Activated CD4-positive, alpha-beta memory T cell treated with anti-CD3 and anti-CD28 coated beads, Interleukin-2, amount 10 ng/mL, durations not matched to agents 7 days and 5 days (primary cell): ENCODE measurements at regions of chr7 and their contacts with region 1.

Region 1: DNA sequence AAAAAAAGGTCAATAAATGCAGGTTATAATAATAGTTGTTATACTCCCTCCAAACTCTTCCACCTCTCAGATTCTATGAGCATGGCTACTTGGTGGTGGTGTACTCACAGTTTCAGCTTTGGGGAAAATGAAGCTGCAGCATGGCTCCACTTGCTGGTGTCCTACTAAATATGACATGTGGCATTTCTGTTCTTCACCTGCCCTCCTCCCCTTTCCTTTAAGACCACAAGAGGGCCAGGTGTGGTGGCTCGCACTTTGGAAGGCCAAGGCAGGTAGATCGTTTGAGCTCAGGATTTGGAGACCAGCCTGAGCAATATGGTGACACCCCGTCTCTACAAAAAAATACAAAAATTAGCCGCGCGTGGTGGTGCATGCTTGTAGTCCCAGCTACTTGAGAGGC is 101.1 kb downstream of the SLC37A3 start:
- DNase-seq: no peak
- H3K4me3 Mint-ChIP-seq: no peak overlapping the region
- H3K27ac Mint-ChIP-seq: no peak overlapping the region
- H3K4me1 Mint-ChIP-seq: peaks cover 4% of the 10 kb centered on the region
- H3K27me3 Mint-ChIP-seq: no peaks in the 10 kb centered on the region

Region 2: GRCh38 chr7:140121326-140121725 is 175.9 kb before region 1 on chr7:
- CTCF ChIA-PET with region 1: no interaction called
- POLR2A ChIA-PET with region 1: no interaction called
- DNase-seq: no peak
- H3K4me3 Mint-ChIP-seq: no peak overlapping the region
- H3K27ac Mint-ChIP-seq: no peak overlapping the region
- H3K4me1 Mint-ChIP-seq: peaks cover 2% of the 10 kb centered on the region
- H3K27me3 Mint-ChIP-seq: no peaks in the 10 kb centered on the region

Region 3: DNA sequence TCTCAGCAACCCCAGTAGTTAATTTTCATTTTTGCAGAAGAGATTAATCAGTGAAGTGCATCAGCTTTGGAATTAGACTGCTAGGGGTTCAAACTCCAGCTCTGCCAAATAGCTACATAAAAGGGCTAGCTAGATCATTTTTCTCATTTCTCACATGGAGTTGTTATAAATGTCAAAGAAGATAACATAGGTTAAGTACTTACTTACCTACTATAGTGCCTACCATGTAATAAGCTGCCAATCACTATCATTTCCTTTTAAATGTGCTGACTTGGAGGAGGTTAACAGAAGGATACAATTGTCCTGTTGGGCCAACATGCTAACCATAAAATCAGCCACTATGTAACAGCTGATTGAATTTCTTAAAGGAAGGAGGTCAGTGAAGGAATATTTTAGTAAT is 161.1 kb before region 1 on chr7:
- CTCF ChIA-PET with region 1: no interaction called
- POLR2A ChIA-PET with region 1: no interaction called
- DNase-seq: no peak
- H3K4me3 Mint-ChIP-seq: no peak overlapping the region
- H3K27ac Mint-ChIP-seq: no peak overlapping the region
- H3K4me1 Mint-ChIP-seq: peaks cover 2% of the 10 kb centered on the region
- H3K27me3 Mint-ChIP-seq: no peaks in the 10 kb centered on the region

Region 4: DNA sequence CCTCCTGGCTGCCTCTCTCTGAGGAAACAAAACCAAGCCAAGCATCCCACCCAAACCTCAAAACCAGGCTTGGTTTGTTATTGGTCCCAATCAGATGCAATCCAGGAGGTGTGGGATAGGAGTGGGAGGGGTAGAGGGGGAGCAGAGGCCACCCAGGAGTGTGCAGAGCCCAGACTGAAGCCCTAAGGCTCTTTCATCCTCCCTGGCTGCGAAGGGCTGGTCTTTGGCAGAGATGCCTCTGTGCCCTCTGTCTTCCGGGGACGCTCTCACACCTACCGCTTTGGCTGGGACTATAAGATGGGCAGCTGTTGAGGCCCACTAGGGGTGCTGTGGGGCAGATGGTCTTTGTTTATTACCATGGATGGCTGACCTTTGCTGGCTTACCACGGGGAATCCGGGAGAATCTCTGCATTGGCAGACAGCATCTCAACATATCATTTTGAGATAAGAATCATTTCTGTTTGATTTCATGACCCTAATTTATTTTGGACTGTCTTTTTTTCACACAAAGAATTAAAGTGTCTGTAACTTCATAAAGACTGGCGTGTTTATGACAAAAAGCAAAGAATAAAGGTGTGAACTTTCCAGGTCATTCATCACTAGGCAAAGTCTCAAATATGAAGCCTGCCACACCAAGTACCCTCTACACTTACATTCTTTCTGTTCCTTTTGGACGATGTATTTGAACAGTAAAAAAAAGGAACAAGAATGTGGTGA is 349.9 kb after region 1 on chr7:
- CTCF ChIA-PET with region 1: interaction called, 10 read pairs
- POLR2A ChIA-PET with region 1: no interaction called
- DNase-seq: peak; percentile 32
- H3K4me3 Mint-ChIP-seq: no peak overlapping the region
- H3K27ac Mint-ChIP-seq: no peak overlapping the region
- H3K4me1 Mint-ChIP-seq: peaks cover 5% of the 10 kb centered on the region
- H3K27me3 Mint-ChIP-seq: peaks cover 24% of the 10 kb centered on the region